Ascending aorta (tissue), 2 donors: ENCODE measurements at regions of chr10 and their contacts with region 1.

Region 1: DNA sequence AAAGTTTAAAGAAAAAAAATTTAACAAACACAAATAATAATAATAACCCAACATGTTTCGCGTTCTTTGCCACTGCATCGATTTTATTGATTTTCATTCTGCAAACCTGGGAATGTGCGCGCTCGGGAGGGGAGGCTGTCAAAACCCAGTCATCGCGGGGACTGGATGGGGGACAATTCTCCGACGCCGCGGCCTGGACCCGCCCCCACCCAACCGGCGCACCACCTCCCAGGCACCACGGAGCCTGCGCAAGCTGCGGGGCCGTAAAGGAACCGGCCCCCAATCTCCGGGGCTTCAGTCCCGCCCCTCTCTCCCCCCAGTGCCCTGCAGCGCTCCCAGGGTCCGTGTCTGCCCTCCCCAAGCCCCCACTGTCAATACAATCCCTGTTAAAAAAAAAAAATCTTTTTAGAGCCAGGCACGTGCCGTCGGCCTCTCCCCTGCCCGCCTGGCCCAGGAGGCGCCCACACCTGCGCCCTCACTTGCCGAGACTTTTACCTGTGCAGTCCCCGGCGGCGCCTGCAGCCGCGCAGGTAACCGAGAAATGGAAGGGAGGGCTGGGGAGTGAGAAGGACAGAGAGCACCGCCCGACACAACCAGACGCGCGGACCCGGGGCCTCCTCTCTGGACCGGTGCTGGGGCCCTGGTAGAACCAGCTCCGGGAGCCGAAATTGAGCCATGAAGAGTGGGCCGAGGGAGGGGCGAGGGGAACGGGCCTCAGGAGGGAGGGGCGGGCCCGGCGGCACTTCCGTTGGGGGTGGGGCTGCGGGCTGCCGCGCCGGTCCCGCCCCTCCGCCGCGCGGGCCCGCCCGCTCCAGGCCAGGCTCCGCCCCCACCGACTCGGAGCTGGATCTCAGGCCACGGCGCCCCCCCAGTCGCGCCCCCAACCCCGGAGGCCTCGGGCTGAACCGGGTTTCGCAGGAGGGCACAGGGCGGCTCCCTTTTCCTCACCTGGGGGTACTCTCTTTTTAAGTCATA is 7.6 kb upstream of the ZNF503 start:
- DNase-seq: peak in 1 of 2 donors; percentile 86
- H3K4me3 ChIP-seq: peak overlapping the region; percentile 91 to 93
- H3K27ac ChIP-seq: peak overlapping the region; percentile 90
- H3K4me1 ChIP-seq: peaks cover 0 to 2% of the 10 kb centered on the region in 2 donors
- H3K27me3 ChIP-seq: no peaks in the 10 kb centered on the region
- CTCF ChIP-seq: no peak

Region 2: DNA sequence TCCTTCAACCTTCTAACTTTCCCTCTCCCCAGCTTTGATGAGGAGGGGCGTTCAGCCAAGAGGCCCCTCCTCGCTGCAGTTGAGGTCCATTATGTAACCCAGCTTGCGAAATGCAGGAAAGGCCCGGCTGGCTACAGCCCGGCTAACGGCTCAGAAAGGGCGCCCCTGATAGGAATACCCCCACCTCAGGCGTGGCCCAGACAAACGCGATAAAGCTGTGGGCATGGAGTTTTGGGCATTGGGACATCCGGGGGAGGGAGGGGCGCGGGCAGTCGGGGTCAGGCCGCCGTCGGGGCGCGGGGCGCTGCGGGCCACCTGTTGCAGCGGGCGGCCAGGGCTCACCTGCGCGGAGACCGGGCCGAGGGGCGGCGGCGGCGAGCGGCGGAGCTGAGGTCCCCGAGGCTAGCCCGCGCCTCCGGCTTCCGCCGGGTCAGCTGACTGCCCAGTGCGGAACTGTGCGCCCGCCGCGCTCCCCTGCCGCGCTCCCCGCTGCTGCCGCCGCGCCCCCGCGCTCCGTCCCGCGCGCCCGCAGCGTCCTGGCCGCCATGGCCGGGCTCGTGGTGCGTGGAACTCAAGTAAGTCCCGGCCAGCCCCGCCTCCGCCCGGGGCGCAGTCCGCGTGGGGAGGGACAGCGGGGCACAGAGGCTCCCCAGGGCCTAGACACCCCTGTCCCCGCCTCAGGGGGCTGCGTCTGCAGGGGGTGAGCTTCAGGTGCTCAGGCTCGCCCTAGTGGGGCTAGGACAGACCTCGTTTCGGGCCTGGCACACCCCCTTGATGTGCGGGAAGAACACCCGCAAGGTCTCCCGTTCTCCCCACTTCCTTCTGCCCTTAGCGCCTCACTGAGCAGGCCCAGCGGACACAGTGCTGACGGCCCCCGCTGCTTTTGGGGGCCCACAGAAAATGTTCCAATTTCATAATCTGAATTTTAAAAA is 22.2 kb after region 1 on chr10 and contains the start of gene LRMDA:
- intact Hi-C with region 1: loop called (anchors 1 kb)
- DNase-seq: peak in 1 of 2 donors; percentile 71
- H3K4me3 ChIP-seq: peak within 1 kb of the TSS; percentile 78 to 85
- H3K27ac ChIP-seq: peak within 1 kb of the TSS; percentile 39 to 42
- H3K4me1 ChIP-seq: peaks cover 0 to 12% of the 10 kb centered on the region in 2 donors
- H3K27me3 ChIP-seq: no peaks in the 10 kb centered on the region
- CTCF ChIP-seq: no peak
- total RNA-seq, gene LRMDA: 0.96 TPM

Region 3: DNA sequence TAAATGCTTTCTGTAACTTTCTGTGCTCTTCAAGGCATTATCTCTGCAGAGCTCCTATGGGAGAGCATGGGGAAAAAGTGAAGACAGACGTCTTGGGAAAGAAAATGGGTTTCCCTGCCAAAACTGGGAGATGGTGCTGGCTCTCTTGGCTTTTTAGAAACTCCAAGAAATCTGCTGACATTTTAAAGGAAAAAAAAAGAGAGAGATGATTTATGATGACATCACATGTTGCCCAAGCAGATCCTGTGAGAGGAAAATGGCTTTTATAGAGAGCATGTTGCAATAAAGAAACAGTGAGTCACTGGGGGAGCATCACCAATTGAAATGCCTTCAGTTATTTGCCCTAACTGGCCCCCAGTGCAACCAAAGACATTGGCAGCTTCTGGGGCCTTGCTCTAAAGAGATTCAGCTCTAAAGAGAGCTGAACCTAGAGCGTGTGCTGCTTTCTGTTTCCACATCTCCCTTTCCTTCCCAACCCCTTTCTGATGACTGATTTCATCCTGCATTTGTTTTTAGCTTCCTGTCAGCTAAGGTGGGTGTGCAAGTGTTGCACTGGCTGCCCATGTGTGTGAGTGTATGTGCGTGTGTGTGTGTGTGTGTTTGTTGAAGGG is 59.9 kb after region 1 on chr10:
- intact Hi-C with region 1: loop called (anchors 5 kb)
- DNase-seq: peak in 1 of 2 donors; percentile 84
- H3K4me3 ChIP-seq: no peak overlapping the region
- H3K27ac ChIP-seq: peak overlapping the region in 1 of 2 donors; percentile 52
- H3K4me1 ChIP-seq: peaks cover 4 to 13% of the 10 kb centered on the region in 2 donors
- H3K27me3 ChIP-seq: no peaks in the 10 kb centered on the region
- CTCF ChIP-seq: no peak

Region 4: DNA sequence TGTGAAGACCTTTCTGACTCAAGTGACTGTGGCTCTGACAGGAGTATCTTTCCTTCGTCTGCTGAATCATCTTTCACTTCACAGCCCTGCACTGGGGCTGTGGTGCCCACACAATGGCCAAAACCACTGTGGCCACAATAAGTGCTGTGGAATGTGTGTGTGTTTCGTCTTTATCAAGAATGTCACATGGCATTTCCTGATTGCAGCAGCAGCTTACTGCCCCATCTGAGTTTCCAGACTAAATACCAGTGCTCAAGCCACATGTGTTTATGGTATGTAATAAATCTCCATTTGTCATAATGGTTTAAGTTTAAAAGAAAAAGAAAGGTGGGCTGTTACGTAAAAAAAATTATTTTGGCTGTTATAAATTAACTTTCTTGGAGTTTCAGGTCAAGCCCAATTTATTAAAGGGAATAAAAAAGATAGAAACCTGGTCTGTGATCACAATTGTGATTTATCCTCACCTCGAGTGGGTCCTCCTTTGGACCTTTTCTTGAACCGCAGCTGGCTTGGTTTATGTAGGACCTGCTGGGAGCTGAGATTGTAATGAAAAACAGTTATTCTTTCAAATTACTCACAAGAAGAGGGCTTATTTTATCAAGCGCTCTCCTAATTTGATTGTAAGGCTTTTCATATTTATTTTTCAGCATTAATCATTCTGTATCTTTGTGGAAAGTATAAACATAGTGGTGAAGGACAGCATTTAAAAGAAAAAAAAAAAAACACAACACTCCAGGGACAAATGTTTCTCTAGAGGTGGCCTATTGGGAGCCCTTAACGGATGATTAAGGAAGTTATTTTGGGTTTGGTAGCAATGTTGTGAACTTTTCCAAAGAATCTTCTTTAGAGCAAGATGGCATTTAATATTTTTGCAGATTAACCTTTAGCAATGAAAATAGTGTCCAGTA is 138.4 kb after region 1 on chr10:
- intact Hi-C with region 1: loop called (anchors 2 kb)
- DNase-seq: no peak
- H3K4me3 ChIP-seq: no peak overlapping the region
- H3K27ac ChIP-seq: peak overlapping the region; percentile 58 to 68
- H3K4me1 ChIP-seq: peaks cover 0 to 31% of the 10 kb centered on the region in 2 donors
- H3K27me3 ChIP-seq: no peaks in the 10 kb centered on the region
- CTCF ChIP-seq: no peak

Region 5: GRCh38 chr10:76086761-76087639 is 677.8 kb after region 1 on chr10:
- intact Hi-C with region 1: loop called (anchors 5 kb)
- DNase-seq: peak in 1 of 2 donors; percentile 67
- H3K4me3 ChIP-seq: no peak overlapping the region
- H3K27ac ChIP-seq: peak overlapping the region; percentile 57 to 61
- H3K4me1 ChIP-seq: peaks cover 0 to 7% of the 10 kb centered on the region in 2 donors
- H3K27me3 ChIP-seq: no peaks in the 10 kb centered on the region
- CTCF ChIP-seq: peak; percentile 22 to 41 (median 33)